ENCODE measurements at regions of chr17 and their contacts with region 1.

Region 1: DNA sequence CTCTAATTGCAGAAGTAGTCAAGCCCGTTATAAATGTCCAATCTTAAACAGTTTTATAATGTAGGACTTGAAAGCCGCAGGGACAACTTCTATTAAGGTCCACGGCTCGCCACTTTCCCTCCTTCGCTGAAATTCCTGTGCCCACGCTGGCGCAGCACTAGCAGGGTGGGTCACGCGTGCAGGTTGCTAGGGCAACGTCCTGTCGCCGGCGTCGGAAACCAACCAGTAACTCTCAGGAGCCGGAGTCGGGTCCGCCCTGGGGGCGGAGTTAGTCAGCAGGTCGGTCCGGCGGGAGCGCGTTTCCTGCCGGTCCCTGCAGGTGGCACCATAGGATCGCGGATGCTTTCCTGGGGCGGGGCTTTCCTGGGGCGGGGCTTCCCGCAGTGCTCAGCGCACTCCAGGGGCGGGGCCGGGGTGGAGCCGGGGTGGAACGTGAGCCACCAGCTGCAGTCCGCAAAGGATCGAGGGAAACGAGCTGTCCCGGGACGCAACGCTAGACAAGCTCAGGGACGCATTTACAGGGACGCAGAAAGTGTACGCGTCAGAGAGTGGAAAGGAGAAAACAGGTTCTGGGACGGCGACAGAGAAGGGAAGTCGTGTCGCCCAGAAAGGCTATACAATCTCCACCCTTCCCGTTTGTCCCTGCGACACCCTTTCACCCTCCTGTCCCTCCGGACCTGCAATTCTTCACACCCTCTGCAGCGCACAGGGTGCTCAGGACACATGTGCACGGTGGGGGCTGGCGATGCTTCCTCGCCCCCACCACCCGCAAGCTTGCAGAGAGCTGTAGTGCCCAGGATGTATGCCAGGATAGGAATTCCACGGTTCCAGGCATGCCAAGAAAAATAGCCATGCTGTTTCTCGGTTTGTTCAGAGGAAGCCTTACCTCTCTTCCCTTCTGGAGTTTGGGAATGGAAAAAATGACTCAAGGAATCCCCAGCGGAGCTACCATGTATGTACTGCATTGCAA is 12.4 kb downstream of the COPZ2 start:
- DNase-seq: peak; percentile 99
- H3K4me3 ChIP-seq: peak overlapping the region; percentile 20 to 50 (median 42)
- H3K27ac ChIP-seq: peak overlapping the region; percentile 82 to 90 (median 87)
- H3K4me1 ChIP-seq: peaks cover 0 to 41% (median 38%) of the 10 kb centered on the region in 4 donors
- H3K27me3 ChIP-seq: peaks cover 0 to 14% (median 7%) of the 10 kb centered on the region in 3 donors
- CTCF ChIP-seq: peak; percentile 68 to 88 (median 84)
- EP300 ChIP-seq: no peak
- POLR2A ChIP-seq: no peak

Region 2: DNA sequence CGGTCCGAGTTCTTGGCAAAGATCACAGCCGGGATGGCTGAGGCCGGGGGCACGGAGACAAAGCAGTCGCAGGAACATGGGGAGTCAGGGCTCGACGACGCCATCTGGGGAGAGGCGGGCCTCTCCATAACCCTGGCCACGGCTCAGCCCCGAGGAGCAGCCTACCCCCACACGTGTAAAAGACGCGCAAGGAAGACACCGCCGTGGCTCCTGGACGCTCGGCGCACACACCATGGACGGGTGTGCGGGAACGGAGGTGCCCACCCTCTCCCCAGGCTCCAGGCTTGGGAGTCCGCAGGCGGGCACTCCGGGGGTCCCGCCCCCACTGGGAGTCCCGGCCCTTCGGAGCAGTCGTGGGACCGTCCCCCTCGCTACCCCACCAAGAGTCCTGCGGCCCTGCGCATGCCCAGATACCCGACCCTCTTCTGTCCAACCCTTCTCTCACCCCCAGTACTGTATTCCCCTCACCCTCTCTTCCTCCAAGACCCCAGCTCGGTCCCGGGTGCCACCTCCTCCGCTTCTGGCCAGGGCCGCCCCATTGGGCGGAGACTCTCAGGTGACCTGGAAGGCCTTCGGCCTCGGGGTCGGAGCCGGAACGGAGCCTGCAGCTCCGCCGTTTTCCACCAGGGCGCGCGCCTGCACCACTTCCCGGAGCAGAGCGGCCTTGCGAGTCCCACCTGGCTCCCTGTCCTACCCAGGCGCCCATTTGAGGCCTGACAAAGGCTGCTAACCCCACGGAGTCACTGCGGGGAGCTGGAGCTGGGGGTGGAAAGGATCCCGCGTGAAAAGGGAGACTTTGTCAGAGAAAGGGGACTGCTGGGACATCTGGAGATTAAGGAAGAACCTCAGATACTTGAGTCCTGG is 184.2 kb before region 1 on chr17 and contains the start of gene SCRN2:
- intact Hi-C with region 1: loop called (anchors 5 kb)
- DNase-seq: peak; percentile 94
- H3K4me3 ChIP-seq: peak within 1 kb of the TSS; percentile 71 to 91 (median 80)
- H3K27ac ChIP-seq: peak within 1 kb of the TSS; percentile 63 to 80 (median 76)
- H3K4me1 ChIP-seq: peaks cover 0 to 22% (median 18%) of the 10 kb centered on the region in 4 donors
- H3K27me3 ChIP-seq: peaks cover 5 to 11% (median 9%) of the 10 kb centered on the region in 3 donors
- CTCF ChIP-seq: peak; percentile 96 to 99 (median 98)
- EP300 ChIP-seq: no peak
- POLR2A ChIP-seq: no peak
- total RNA-seq, gene SCRN2: 22.5 to 28.8 (median 23.4) TPM

Region 3: GRCh38 chr17:47895856-47896671 is 129.2 kb before region 1 on chr17 and contains the start of gene SP2:
- intact Hi-C with region 1: loop called (anchors 5 kb)
- DNase-seq: peak; percentile 100
- H3K4me3 ChIP-seq: peak within 1 kb of the TSS; percentile 76 to 93 (median 86)
- H3K27ac ChIP-seq: peak within 1 kb of the TSS; percentile 98 to 99 (median 98)
- H3K4me1 ChIP-seq: peaks cover 0 to 33% (median 25%) of the 10 kb centered on the region in 4 donors
- H3K27me3 ChIP-seq: no peaks in the 10 kb centered on the region
- CTCF ChIP-seq: no peak
- EP300 ChIP-seq: no peak
- POLR2A ChIP-seq: peak; percentile 69 to 70
- total RNA-seq, gene SP2: 3.0 to 8.3 (median 5.6) TPM

Region 4: GRCh38 chr17:47907932-47908562 is 117.2 kb before region 1 on chr17:
- intact Hi-C with region 1: no loop called
- DNase-seq: no peak
- H3K4me3 ChIP-seq: no peak overlapping the region
- H3K27ac ChIP-seq: peak overlapping the region; percentile 81 to 90 (median 84)
- H3K4me1 ChIP-seq: peaks cover 0 to 62% (median 58%) of the 10 kb centered on the region in 4 donors
- H3K27me3 ChIP-seq: no peaks in the 10 kb centered on the region
- CTCF ChIP-seq: no peak
- EP300 ChIP-seq: no peak
- POLR2A ChIP-seq: no peak

Region 5: GRCh38 chr17:48074315-48075081 is 49.3 kb after region 1 on chr17:
- intact Hi-C with region 1: loop called (anchors 1 kb)
- DNase-seq: peak; percentile 86
- H3K4me3 ChIP-seq: no peak overlapping the region
- H3K27ac ChIP-seq: peak overlapping the region in 3 of 4 donors; percentile 19 to 45 (median 39)
- H3K4me1 ChIP-seq: peaks cover 0 to 9% (median 3%) of the 10 kb centered on the region in 4 donors
- H3K27me3 ChIP-seq: no peaks in the 10 kb centered on the region
- CTCF ChIP-seq: peak; percentile 52 to 84 (median 74)
- EP300 ChIP-seq: no peak
- POLR2A ChIP-seq: no peak

Region 6: DNA sequence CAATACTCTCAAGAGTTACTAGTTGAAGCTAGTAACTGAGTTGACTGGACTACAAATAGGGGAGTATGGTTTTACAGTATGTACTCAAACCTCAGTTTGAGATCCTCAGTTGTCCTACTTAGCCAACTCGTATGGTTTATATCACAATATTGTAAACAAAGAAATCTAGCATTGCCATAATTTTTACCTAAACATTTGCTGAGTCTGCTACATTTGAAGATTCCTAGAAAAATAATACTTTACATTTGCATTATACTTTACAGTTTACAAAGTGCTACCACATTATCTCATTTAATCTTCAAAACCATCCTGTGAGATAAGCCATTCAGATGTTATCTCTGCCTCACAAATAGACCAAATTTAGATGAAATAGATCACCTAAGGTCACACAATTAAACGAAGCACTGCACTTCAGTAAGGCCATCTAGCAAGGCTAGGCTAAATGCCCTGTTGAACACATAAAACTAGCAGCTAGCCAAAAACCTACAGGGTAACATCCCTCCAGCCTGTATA is 59.8 kb after region 1 on chr17:
- intact Hi-C with region 1: no loop called
- DNase-seq: no peak
- H3K4me3 ChIP-seq: no peak overlapping the region
- H3K27ac ChIP-seq: peak overlapping the region in 1 of 4 donors; percentile 32
- H3K4me1 ChIP-seq: peaks cover 0 to 24% (median 21%) of the 10 kb centered on the region in 4 donors
- H3K27me3 ChIP-seq: no peaks in the 10 kb centered on the region
- CTCF ChIP-seq: no peak
- EP300 ChIP-seq: no peak
- POLR2A ChIP-seq: no peak

Region 7: GRCh38 chr17:48101012-48101720 is 75.9 kb after region 1 on chr17 and contains the start of gene CBX1:
- intact Hi-C with region 1: loop called (anchors 2 kb)
- DNase-seq: peak; percentile 96
- H3K4me3 ChIP-seq: peak within 1 kb of the TSS; percentile 81 to 100 (median 94)
- H3K27ac ChIP-seq: peak within 1 kb of the TSS; percentile 94 to 98 (median 95)
- H3K4me1 ChIP-seq: peaks cover 0 to 28% (median 9%) of the 10 kb centered on the region in 4 donors
- H3K27me3 ChIP-seq: no peaks in the 10 kb centered on the region
- CTCF ChIP-seq: no peak
- EP300 ChIP-seq: no peak
- POLR2A ChIP-seq: peak; percentile 44 to 61
- total RNA-seq, gene CBX1: 29.1 to 37.4 (median 32.9) TPM

Region 8: DNA sequence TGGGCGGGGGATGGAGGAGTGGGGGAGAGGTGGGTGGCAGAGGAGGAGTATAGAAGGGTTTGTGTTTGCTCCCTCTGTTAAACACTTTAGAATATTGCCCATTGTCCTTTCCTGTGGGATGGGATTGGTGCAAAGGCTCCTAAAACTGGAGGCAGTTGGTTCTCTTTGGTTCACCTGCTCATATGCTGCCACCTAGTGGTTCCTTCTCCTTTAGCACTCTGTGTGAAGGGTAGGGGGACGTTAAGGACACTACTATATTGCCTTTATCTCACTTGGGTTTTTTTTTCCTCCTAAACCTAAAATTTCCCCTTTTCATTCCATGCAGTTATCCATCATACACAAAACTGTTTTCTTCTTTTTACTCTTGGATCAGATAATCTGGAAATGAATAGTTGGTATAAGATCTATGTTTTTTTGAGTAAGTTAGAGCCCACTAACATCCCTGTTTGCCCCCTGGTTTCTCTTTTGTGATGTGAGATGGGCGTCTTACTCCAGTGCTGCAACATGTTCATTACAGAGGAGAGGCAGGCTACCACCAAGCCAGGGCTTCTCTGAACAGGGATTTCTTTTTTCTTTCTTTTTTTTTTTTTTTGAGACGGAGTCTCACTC is 106.1 kb after region 1 on chr17:
- intact Hi-C with region 1: loop called (anchors 1 kb)
- DNase-seq: peak; percentile 70
- H3K4me3 ChIP-seq: no peak overlapping the region
- H3K27ac ChIP-seq: no peak overlapping the region
- H3K4me1 ChIP-seq: no peaks in the 10 kb centered on the region
- H3K27me3 ChIP-seq: no peaks in the 10 kb centered on the region
- CTCF ChIP-seq: peak; percentile 69 to 79 (median 78)
- EP300 ChIP-seq: no peak
- POLR2A ChIP-seq: no peak

Region 9: GRCh38 chr17:48618256-48618897 is 593.2 kb after region 1 on chr17:
- intact Hi-C with region 1: loop called (anchors 10 kb)
- DNase-seq: peak; percentile 95
- H3K4me3 ChIP-seq: no peak overlapping the region
- H3K27ac ChIP-seq: no peak overlapping the region
- H3K4me1 ChIP-seq: peaks cover 0 to 32% (median 26%) of the 10 kb centered on the region in 4 donors
- H3K27me3 ChIP-seq: peaks cover 79 to 100% (median 97%) of the 10 kb centered on the region in 3 donors
- CTCF ChIP-seq: peak; percentile 95 to 99 (median 96)
- EP300 ChIP-seq: no peak
- POLR2A ChIP-seq: no peak

Measured in sigmoid colon (tissue), 7 donors.